Activated CD4-positive, alpha-beta memory T cell treated with anti-CD3 and anti-CD28 coated beads for 36 hours (primary cell): ENCODE measurements at regions of chrX and their contacts with region 1.

Region 1: DNA sequence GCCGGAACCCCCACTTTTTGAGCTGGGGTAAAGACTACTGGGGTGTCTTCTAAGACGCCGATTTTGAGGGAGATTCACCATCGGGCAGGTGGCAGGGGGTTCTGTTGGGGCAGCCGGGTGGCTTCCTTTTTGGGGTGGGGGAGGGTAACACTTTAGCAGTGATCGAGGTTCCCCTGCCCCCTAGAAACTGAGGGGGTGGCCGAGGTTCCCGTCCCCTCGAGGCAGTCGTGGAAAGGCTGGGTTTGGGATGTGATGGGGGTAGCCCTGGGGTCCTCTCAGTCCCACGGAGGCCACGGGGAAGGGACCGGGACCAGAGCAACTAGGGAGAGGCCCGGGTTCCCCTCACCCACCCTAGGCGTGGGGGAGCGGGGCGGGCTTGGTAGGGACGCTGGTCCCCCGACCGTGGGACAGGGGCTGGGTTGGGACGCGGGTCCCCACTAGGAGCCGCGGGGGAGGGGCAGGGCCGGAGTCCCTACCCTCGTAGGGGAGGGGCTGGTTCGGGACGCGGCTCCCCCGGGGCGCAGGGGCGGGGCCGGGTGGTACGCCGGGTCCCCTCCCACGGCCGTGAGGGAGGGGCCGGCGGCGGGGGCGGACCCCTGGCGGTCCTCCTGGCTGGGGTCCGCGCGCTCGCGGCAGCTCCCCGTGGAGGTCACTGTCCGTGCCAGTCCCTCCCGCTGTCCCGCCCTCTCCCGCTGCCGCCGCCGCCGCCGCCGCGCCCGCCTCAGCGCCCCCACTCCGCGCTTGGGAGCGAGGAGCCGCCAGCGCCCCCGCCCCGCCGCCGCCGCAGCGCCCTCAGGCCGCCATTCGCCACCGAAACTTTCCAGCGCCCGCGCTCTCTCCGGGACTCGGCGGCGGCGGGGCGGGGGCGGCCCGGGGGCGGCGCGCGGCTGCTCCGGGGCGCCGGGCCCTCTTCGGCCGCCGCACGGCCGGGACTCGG is at the start of gene TBL1X:
- DNase-seq: peak; percentile 57
- H3K4me3 Mint-ChIP-seq: peak within 1 kb of the TSS; percentile 68
- H3K27ac Mint-ChIP-seq: peak within 1 kb of the TSS; percentile 78
- H3K4me1 Mint-ChIP-seq: peaks cover 33% of the 10 kb centered on the region
- H3K27me3 Mint-ChIP-seq: peaks cover 2% of the 10 kb centered on the region
- total RNA-seq, gene TBL1X: 21.1 to 23.5 TPM

Region 2: GRCh38 chrX:8724300-8724699 is 740.4 kb before region 1 on chrX:
- CTCF ChIA-PET with region 1: no interaction called
- POLR2A ChIA-PET with region 1: no interaction called
- intact Hi-C with region 1: no loop called
- DNase-seq: no peak
- H3K4me3 Mint-ChIP-seq: no peak overlapping the region
- H3K27ac Mint-ChIP-seq: no peak overlapping the region
- H3K4me1 Mint-ChIP-seq: no peaks in the 10 kb centered on the region
- H3K27me3 Mint-ChIP-seq: peaks cover 6% of the 10 kb centered on the region

Region 3: GRCh38 chrX:9163214-9163681 is 301.5 kb before region 1 on chrX:
- CTCF ChIA-PET with region 1: no interaction called
- POLR2A ChIA-PET with region 1: no interaction called
- intact Hi-C with region 1: loop called (anchors 5 kb)
- DNase-seq: no peak
- H3K4me3 Mint-ChIP-seq: no peak overlapping the region
- H3K27ac Mint-ChIP-seq: peak overlapping the region; percentile 33
- H3K4me1 Mint-ChIP-seq: peaks cover 44% of the 10 kb centered on the region
- H3K27me3 Mint-ChIP-seq: no peaks in the 10 kb centered on the region

Region 4: DNA sequence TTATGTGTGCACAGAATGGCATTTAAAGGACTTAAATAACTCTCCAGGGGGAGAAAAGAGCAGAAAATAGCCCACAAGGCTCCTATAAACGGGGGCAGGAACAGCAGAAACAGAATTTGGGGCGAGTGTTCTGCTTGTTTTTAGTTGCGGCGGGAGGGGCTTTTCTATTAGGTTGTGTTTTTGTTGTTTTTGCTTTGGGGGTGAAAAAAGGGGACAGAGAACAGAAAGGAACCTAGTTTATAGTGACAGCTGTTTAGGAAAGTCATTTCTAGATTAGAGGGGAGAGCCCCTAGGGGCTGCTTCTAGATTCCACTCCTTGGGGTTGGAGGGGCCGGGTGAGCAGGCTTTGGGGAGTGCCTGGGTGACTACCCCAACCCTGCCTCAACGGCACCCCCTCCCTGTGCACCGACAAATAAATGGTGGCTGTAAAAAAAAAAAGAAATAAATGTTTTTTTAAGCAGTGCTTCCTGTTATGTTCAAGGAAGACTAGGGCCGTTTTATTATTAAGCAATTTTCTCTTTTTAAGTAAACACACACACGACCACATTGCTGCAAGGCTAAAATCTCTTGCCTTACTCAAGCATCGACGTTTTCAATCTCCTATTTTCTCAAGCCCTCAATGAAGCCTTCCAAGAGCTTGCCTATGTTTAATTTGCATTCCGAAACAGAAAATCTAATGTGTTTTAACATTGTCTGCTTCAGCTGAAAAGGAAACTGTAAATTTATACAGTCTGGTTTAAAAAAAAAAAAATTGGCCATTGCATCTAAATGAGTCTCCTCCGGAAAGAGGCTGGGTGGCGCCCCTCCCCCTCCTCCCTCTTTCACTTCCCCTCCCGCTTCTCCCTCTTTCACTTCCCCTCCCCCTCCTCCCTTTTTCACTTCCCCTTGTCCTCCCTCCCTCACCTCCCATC is 123.2 kb before region 1 on chrX:
- CTCF ChIA-PET with region 1: interaction called, 3 read pairs
- POLR2A ChIA-PET with region 1: interaction called, 7 read pairs
- intact Hi-C with region 1: loop called (anchors 1 kb)
- DNase-seq: peak; percentile 76
- H3K4me3 Mint-ChIP-seq: peak overlapping the region; percentile 30
- H3K27ac Mint-ChIP-seq: peak overlapping the region; percentile 84
- H3K4me1 Mint-ChIP-seq: peaks cover 30% of the 10 kb centered on the region
- H3K27me3 Mint-ChIP-seq: no peaks in the 10 kb centered on the region

Region 5: GRCh38 chrX:9622128-9622527 is 157.4 kb after region 1 on chrX:
- CTCF ChIA-PET with region 1: no interaction called
- POLR2A ChIA-PET with region 1: no interaction called
- intact Hi-C with region 1: loop called (anchors 5 kb)
- DNase-seq: peak; percentile 50
- H3K4me3 Mint-ChIP-seq: no peak overlapping the region
- H3K27ac Mint-ChIP-seq: no peak overlapping the region
- H3K4me1 Mint-ChIP-seq: peaks cover 40% of the 10 kb centered on the region
- H3K27me3 Mint-ChIP-seq: no peaks in the 10 kb centered on the region

Region 6: GRCh38 chrX:9708904-9709553 is 244.3 kb after region 1 on chrX:
- CTCF ChIA-PET with region 1: no interaction called
- POLR2A ChIA-PET with region 1: no interaction called
- intact Hi-C with region 1: loop called (anchors 1 kb)
- DNase-seq: peak; percentile 79
- H3K4me3 Mint-ChIP-seq: no peak overlapping the region
- H3K27ac Mint-ChIP-seq: no peak overlapping the region
- H3K4me1 Mint-ChIP-seq: peaks cover 8% of the 10 kb centered on the region
- H3K27me3 Mint-ChIP-seq: no peaks in the 10 kb centered on the region

Region 7: DNA sequence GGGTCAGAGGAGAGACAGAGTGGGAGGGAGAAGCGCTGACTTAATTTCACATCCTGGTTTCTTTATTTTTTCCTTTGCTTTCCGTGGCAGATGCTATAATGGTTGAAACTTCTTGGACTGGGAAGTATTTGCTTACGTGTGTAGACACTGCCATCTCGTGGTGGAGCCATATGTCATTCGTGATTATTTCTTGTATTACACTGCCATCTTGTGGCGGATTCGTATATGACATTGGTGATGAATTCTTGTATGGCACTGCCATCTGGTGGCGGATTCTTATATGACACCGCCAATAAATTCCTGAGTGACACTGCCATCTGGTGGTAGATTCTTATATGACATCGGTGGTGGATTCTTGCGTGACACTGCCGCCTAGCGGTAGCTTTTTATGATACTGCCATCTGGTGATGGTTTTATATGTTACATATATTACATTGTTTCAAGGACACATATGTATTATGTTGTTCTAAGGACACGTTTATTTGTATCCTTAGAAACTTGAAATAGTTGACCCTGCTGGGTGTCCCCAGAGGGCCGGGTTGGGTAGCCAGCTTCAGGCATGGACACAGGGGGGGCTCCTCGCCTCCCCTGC is 654.8 kb after region 1 on chrX:
- CTCF ChIA-PET with region 1: no interaction called
- POLR2A ChIA-PET with region 1: no interaction called
- intact Hi-C with region 1: loop called (anchors 10 kb)
- DNase-seq: peak; percentile 72
- H3K4me3 Mint-ChIP-seq: no peak overlapping the region
- H3K27ac Mint-ChIP-seq: peak overlapping the region; percentile 71
- H3K4me1 Mint-ChIP-seq: peaks cover 19% of the 10 kb centered on the region
- H3K27me3 Mint-ChIP-seq: no peaks in the 10 kb centered on the region